A549 (cell line): ENCODE measurements at regions of chr17 and their contacts with region 1.

Region 1: GRCh38 chr17:36133602-36134236 is 30.1 kb downstream of the CCL4 start:
- DNase-seq: peak in 1 of 2 experiments; percentile 12
- ATAC-seq: no peak
- H3K4me3 ChIP-seq: no peak overlapping the region
- H3K27ac ChIP-seq: no peak overlapping the region
- H3K4me1 ChIP-seq: no peaks in the 10 kb centered on the region
- CTCF ChIP-seq: no peak
- EP300 ChIP-seq: no peak
- POLR2A ChIP-seq: no peak
- RAD21 ChIP-seq: no peak

Region 2: DNA sequence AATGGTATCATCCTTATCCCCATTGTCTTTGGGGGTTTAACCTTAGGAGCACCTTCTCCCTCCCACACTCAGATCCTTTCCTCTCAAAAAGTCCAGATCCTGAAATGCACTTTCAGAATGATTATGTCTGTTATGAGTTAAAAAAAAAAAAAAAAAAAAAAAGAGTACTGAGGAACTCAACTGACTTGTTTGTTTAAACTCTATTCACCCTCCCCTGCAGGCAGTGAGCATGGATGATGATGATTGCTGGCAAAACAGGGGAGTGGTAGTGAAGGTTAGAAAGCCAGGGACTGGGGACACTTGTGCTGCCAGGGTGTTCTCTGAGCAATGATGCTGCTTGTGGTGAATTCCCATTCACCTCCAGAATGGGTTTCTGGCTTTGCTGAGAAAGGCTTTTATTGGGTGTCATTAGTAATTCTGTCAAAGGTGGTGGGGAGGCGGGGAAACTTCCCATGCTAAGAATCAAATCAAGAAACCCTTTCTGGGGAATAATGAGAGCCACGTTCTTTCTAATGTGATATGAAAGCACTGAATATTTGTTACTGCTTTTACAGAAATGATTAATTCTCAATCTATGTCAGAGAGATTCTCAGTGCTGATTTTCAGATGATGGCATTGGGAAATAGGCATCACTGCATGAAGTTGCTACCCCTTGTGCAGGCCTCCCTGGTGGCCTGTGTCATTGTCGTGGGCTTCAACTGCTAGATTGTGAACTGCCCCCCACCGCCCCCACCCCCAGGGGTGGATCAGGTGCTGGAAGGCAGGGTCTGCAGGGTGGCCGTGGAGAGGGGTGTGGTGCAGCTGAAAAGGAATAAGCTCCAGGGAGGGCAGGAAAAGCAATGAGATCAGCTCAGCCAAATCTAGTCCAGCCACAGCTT is 16.0 kb before region 1 on chr17:
- CTCF ChIA-PET with region 1: interaction called, 13 read pairs
- POLR2A ChIA-PET with region 1: no interaction called
- DNase-seq: no peak
- ATAC-seq: no peak
- H3K4me3 ChIP-seq: no peak overlapping the region
- H3K27ac ChIP-seq: no peak overlapping the region
- H3K4me1 ChIP-seq: no peaks in the 10 kb centered on the region
- CTCF ChIP-seq: no peak
- EP300 ChIP-seq: no peak
- POLR2A ChIP-seq: no peak
- RAD21 ChIP-seq: no peak